ENCODE measurements at regions of chr11 and their contacts with region 1.

Region 1: GRCh38 chr11:78318321-78319114 is 99.1 kb downstream of the GAB2 start:
- DNase-seq: peak; percentile 5 to 84 (median 75)
- H3K4me3 ChIP-seq: peak overlapping the region in 29 of 59 donors; percentile 3 to 40 (median 17)
- H3K27ac ChIP-seq: peak overlapping the region in 58 of 59 donors; percentile 66 to 99 (median 93)
- H3K27me3 ChIP-seq: no peaks in the 10 kb centered on the region
- CTCF ChIP-seq: peak in 14 of 56 donors; percentile 11 to 44 (median 24)

Region 2: GRCh38 chr11:78244546-78245255 is 73.8 kb before region 1 on chr11:
- intact Hi-C with region 1: loop called in 1 of 2 experiments (anchors 5 kb)
- DNase-seq: no peak
- H3K4me3 ChIP-seq: peak overlapping the region in 2 of 59 donors; percentile 7 to 19
- H3K27ac ChIP-seq: peak overlapping the region in 56 of 59 donors; percentile 3 to 90 (median 73)
- H3K27me3 ChIP-seq: no peaks in the 10 kb centered on the region
- CTCF ChIP-seq: no peak

Region 3: DNA sequence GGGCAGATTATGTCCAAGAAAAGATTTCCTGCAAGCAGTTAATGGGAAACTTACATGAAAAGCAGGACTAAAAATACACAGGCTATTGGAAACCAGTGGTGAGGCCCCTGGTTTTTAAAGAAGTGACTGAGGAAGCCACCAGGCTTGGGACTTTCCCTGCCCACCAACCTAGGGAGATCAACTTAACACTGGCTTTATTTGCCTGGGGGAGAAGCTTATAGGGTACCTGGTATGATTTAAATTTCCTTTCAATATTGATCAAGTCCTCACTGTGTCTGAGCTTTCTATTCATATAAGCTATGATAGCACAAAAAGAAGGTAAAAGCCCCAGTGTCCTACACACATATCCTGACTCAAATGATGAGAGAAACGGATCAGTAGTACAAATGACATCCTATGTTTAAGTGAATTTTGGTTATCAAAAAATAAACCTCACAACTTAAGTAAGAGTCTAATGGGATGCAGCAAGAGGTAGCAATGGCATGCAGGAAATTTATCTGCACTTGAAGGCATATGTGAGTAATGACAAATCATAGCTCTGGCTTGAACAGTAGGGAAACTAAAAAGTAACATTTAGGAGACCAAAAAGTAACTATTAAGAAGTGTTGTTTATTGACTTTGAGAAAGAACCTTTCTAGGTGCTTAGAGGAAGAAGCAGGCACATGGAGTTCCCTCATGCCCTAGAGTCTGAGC is 13.8 kb after region 1 on chr11:
- intact Hi-C with region 1: loop called in 1 of 2 experiments (anchors 1 kb)
- DNase-seq: no peak
- H3K4me3 ChIP-seq: peak overlapping the region in 7 of 59 donors; percentile 1 to 31 (median 13)
- H3K27ac ChIP-seq: peak overlapping the region in 58 of 59 donors; percentile 43 to 99 (median 89)
- H3K27me3 ChIP-seq: no peaks in the 10 kb centered on the region
- CTCF ChIP-seq: peak in 3 of 56 donors; percentile 1 to 8 (median 1)

Measured in dorsolateral prefrontal cortex (tissue), 120 donors.